GM23248 (cell line): ENCODE measurements at regions of chr10 and their contacts with region 1.

Region 1: GRCh38 chr10:123994417-123995081 is 98.8 kb downstream of the CHST15 start:
- DNase-seq: peak; percentile 94
- H3K4me3 ChIP-seq: peak overlapping the region; percentile 65
- H3K27ac ChIP-seq: peak overlapping the region; percentile 66
- H3K4me1 ChIP-seq: peaks cover 32% of the 10 kb centered on the region
- H3K27me3 ChIP-seq: peaks cover 18% of the 10 kb centered on the region

Region 2: DNA sequence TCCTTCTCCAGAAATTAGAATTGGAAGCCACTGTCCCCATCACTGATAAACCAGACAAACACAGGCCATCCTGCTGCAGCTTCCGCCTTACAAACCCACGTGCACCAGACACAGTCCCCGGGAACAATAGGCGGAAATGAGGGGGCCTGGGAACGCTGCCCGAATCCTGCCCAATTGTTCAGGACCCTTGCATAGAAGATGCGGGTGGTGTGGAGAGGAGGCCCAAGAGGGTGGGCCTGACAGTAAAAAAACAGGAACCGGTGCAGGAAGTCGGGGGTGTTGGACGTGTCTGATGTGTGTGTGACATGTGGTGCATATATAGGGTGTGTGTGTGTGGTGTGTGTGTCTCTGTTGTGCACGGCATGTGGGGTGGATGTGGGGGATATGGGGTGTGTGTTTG is 125.4 kb after region 1 on chr10:
- in situ Hi-C with region 1: no loop called
- DNase-seq: no peak
- H3K4me3 ChIP-seq: no peak overlapping the region
- H3K27ac ChIP-seq: no peak overlapping the region
- H3K4me1 ChIP-seq: no peaks in the 10 kb centered on the region
- H3K27me3 ChIP-seq: no peaks in the 10 kb centered on the region

Region 3: GRCh38 chr10:124403548-124403947 is 409.0 kb after region 1 on chr10:
- in situ Hi-C with region 1: loop called (anchors 5 kb)
- DNase-seq: peak; percentile 82
- H3K4me3 ChIP-seq: no peak overlapping the region
- H3K27ac ChIP-seq: no peak overlapping the region
- H3K4me1 ChIP-seq: no peaks in the 10 kb centered on the region
- H3K27me3 ChIP-seq: no peaks in the 10 kb centered on the region